ENCODE measurements at regions of chr3 and their contacts with region 1.

Region 1: DNA sequence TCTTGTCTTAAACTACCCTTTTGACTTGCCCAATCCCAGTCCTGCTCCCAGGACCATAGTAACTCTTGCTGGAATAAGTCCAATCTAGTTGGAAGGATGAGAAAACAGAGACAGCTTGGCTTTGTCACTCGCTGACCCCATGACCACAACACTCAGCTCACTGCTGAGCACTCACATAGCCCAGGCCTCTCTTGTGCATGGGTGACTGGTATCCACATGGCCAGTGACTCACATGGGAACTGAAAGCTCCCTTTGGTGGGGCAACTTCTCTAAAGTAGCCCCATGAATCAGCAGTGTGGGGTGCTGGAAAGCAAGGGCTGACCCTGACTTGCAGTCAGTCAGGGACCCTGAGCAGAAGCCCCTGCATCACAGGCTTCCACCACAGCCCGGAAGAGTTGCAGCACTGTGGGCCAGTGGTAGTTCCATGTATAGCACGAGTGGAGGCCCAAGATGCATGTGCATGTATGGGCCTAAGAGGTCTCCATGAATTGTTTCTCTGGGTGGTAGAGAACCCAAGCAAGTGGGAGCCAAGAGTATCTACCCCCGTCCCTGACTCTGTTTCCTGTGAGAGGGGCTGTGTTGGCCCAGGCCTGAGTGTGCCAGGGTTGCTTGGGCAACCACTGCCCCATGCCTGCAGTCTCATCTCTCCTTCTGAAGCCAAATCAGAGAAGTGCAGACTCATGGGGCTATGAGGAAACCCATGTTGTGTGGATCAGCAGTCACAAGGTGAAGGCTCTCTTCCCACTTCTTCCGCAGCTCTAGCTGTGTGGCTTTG is 62.1 kb upstream of the XCR1 start:
- DNase-seq: peak; percentile 74
- ATAC-seq: peak; percentile 84

Region 2: GRCh38 chr3:46378426-46378942 is 289.1 kb after region 1 on chr3:
- intact Hi-C with region 1: loop called (anchors 10 kb)
- DNase-seq: peak; percentile 78
- ATAC-seq: peak; percentile 55

Measured in Right ventricle myocardium superior (tissue), 1 donor.